Mammary epithelial cell (primary cell): ENCODE measurements at regions of chr4 and their contacts with region 1.

Region 1: GRCh38 chr4:242121-242848 is 63.0 kb downstream of the ZNF732 start:
- DNase-seq: peak; percentile 70
- H3K4me3 ChIP-seq: peak overlapping the region; percentile 22 to 47 (median 44)
- H3K27ac ChIP-seq: no peak overlapping the region
- H3K4me1 ChIP-seq: no peaks in the 10 kb centered on the region
- H3K27me3 ChIP-seq: no peaks in the 10 kb centered on the region
- CTCF ChIP-seq: peak; percentile 51 to 77

Region 2: DNA sequence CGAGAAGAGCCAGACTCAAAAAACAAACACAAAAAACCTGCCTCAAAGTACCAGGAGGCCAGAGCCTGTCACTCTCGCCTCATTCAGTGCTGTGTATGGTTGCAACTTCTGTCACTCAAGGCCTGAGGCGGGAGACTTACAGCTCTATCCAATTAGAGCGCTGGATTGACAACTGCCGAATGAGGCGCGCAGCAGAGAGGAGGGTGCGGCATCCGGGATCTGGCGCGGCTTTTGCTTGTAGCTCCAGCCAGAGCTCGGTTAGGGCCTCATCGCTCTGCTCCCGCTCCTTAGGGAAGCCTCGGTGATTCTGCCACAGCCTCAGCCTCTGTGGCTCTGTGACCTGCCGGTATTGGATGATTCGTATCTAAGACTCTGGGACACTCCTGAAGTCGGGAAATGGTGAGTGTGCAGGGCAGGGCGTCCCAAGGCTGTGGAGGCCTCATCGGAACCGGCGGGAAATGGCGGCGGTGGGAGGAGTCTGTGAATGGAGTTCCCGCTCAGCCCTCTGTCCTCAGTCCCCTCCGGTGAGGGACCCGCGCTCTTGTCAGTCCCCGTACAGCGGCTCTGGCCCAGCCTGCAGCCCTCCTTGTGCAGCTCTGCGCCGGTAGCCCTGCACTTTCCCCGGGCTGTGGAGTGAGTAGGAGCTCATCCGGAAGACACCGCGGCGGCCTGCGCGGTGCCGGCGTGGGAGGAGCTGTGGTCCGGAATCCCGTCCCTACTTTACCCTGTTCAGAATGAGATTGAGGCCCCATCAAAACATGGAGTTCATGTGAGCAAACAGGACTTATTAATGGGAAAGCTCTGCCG is 117.8 kb before region 1 on chr4 and contains the start of gene ZNF718:
- CTCF ChIA-PET with region 1: no interaction called
- dilution Hi-C with region 1: no loop called
- in situ Hi-C with region 1: no loop called
- intact Hi-C with region 1: loop called (anchors 1 kb)
- DNase-seq: peak; percentile 97
- H3K4me3 ChIP-seq: peak within 1 kb of the TSS; percentile 85 to 99 (median 90)
- H3K27ac ChIP-seq: peak within 1 kb of the TSS; percentile 89
- H3K4me1 ChIP-seq: peaks cover 3% of the 10 kb centered on the region
- H3K27me3 ChIP-seq: no peaks in the 10 kb centered on the region
- CTCF ChIP-seq: no peak
- total RNA-seq, gene ZNF718: 9.2 to 11.8 TPM

Region 3: GRCh38 chr4:200936-201335 is 41.3 kb before region 1 on chr4:
- CTCF ChIA-PET with region 1: no interaction called
- dilution Hi-C with region 1: no loop called
- in situ Hi-C with region 1: no loop called
- intact Hi-C with region 1: no loop called
- DNase-seq: no peak
- H3K4me3 ChIP-seq: no peak overlapping the region
- H3K27ac ChIP-seq: no peak overlapping the region
- H3K4me1 ChIP-seq: no peaks in the 10 kb centered on the region
- H3K27me3 ChIP-seq: no peaks in the 10 kb centered on the region
- CTCF ChIP-seq: no peak

Region 4: DNA sequence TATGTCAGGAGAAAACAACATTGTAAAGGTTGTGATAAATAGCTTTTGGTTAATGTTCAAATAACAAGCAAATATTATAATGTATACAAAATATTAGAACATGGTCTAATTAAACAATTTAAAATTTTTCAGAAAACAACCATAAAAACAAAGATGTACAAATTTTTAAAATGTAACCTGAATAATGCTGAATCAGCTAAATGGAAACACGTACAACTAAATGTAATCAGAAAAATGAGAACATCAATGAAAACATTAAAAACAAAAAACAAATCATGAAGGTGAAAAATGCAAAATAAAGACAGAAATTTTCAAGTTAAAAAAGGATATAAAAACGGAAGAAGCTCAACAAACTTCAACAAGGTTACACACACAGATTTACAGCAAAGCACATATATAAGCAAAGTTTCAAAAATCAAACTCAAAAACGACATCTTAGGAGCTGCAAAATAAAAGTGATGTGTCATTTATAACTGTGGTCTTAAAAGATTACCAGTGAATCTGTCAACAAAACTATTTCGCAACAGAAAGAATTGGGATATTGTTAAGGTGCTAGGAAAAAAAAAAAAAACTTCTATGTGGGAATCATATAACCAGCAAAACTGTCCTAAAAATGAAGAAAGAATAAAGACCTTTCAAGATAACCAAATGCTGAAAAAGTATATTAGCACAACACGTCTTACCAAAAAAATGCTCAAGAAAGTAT is 31.2 kb after region 1 on chr4:
- CTCF ChIA-PET with region 1: no interaction called
- dilution Hi-C with region 1: no loop called
- in situ Hi-C with region 1: no loop called
- intact Hi-C with region 1: no loop called
- DNase-seq: no peak
- H3K4me3 ChIP-seq: no peak overlapping the region
- H3K27ac ChIP-seq: no peak overlapping the region
- H3K4me1 ChIP-seq: no peaks in the 10 kb centered on the region
- H3K27me3 ChIP-seq: no peaks in the 10 kb centered on the region
- CTCF ChIP-seq: no peak

Region 5: DNA sequence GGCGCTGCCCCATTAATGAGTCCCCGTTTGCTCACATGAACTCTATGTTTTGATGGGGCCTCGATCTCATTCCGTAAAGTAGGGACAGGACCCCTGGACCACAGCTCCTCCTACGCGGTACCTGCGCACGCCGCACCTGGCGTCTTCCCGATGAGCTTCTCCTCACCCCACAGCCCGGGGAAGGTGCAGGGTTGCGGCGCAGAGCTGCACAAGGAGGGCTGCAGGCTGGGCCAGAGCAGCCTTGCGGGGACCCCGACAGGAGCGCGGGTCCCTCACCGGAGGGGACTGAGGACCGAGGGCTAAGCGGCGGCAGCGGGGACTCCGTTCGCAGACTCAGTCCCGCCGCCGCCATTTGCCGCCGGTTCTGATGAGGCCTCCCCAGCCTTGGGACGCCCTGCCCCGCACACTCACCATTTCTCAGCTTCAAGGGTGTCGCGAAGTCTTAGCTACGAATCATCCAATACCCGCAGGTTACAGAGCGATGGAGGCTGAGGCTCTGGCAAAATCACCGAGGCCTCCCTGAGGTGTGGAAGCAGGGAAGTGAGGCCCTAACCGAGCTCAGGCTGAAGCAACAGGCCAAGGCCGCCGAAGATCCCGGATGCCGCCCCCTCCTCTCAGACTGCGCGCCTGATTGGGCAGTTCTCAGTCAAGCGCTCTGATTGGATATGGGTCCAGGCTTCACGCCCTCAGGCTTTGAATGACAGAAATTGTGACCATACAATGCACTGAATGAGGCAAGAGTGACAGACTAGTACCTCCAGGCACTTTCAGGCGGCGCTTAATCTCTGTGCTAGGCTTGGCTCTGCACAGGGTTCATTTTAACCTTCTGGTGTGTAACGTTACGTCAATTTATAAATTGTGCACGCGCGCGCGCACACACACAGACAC is 231.5 kb after region 1 on chr4:
- CTCF ChIA-PET with region 1: no interaction called
- dilution Hi-C with region 1: no loop called
- in situ Hi-C with region 1: no loop called
- intact Hi-C with region 1: loop called (anchors 1 kb)
- DNase-seq: peak; percentile 99
- H3K4me3 ChIP-seq: peak overlapping the region; percentile 73 to 77 (median 77)
- H3K27ac ChIP-seq: peak overlapping the region; percentile 85
- H3K4me1 ChIP-seq: peaks cover 14% of the 10 kb centered on the region
- H3K27me3 ChIP-seq: no peaks in the 10 kb centered on the region
- CTCF ChIP-seq: no peak

Region 6: GRCh38 chr4:1260418-1261106 is 1018.3 kb after region 1 on chr4:
- CTCF ChIA-PET with region 1: no interaction called
- dilution Hi-C with region 1: no loop called
- in situ Hi-C with region 1: no loop called
- intact Hi-C with region 1: loop called (anchors 10 kb)
- DNase-seq: no peak
- H3K4me3 ChIP-seq: no peak overlapping the region
- H3K27ac ChIP-seq: no peak overlapping the region
- H3K4me1 ChIP-seq: no peaks in the 10 kb centered on the region
- H3K27me3 ChIP-seq: no peaks in the 10 kb centered on the region
- CTCF ChIP-seq: no peak